Heart right ventricle (tissue), 16 donors: ENCODE measurements at regions of chr16 and their contacts with region 1.

Region 1: DNA sequence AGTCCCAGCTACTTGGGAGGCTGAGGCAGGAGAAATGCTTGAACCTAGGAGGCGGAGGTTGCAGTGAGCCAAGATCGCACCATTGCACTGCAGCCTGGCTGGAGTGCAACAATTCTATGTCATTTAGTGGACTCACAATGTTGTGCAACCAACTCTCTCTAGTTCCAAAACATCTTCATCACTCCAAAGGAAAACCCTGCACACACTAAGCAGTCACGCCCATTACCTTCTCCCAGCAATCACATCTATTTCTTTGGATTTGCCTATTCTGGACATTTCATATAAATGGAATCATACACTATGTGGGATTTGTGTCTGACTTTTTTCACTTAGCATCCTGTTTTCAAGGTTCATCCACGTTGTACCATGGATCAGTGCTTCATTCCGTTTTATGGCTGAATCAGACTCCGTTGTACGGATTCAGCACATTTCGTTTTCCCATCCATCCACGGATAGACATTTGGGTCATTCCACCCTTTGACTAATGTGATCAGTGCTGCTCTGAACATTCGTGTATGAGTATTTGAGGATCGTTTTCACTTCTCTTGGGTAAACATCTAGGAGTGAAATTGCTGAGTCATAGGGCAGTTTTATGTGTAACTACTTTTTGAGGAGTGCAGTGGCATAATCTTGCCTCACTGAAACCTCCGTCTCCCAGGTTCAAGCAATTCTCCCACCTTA is 45.3 kb upstream of the EMP2 start:
- DNase-seq: no peak
- ATAC-seq: no peak
- H3K4me3 ChIP-seq: no peak overlapping the region
- H3K27ac ChIP-seq: no peak overlapping the region
- H3K4me1 ChIP-seq: peaks cover 0 to 10% (median 3%) of the 10 kb centered on the region in 9 donors
- H3K27me3 ChIP-seq: no peaks in the 10 kb centered on the region
- CTCF ChIP-seq: no peak

Region 2: DNA sequence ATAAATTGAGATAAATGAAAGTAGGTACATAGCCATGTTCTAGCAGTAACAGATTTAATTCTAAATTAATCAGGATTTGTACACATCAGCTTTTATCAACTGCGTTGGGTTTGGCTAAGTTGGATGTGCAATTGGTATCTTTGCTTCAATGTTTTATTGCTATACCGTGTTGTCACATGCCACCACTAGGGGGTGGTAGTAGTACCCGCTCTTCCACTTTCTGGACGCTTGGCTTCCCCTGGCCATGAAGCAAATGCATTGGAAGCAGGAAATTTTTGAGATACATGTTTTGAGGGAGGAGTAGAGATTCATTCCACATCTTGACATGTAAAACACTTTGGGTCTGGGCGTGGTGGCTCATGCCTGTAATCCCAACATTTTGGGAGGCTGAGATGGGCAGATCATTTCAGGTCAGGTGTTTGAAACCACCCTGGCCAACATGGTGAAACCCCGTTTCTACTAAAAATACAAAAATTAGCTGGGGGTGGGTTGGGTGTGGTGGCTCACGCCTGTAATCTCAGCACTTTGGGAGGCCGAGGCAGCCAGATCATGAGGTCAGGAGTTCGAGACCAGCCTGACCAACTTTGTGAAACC is 104.0 kb before region 1 on chr16:
- intact Hi-C with region 1: loop called in 1 of 10 experiments (anchors 10 kb)
- DNase-seq: peak in 1 of 2 donors; percentile 58
- ATAC-seq: peak; percentile 49 to 86 (median 78)
- H3K4me3 ChIP-seq: no peak overlapping the region
- H3K27ac ChIP-seq: no peak overlapping the region
- H3K4me1 ChIP-seq: peaks cover 0 to 6% (median 0%) of the 10 kb centered on the region in 9 donors
- H3K27me3 ChIP-seq: no peaks in the 10 kb centered on the region
- CTCF ChIP-seq: peak; percentile 74 to 92 (median 83)

Region 3: DNA sequence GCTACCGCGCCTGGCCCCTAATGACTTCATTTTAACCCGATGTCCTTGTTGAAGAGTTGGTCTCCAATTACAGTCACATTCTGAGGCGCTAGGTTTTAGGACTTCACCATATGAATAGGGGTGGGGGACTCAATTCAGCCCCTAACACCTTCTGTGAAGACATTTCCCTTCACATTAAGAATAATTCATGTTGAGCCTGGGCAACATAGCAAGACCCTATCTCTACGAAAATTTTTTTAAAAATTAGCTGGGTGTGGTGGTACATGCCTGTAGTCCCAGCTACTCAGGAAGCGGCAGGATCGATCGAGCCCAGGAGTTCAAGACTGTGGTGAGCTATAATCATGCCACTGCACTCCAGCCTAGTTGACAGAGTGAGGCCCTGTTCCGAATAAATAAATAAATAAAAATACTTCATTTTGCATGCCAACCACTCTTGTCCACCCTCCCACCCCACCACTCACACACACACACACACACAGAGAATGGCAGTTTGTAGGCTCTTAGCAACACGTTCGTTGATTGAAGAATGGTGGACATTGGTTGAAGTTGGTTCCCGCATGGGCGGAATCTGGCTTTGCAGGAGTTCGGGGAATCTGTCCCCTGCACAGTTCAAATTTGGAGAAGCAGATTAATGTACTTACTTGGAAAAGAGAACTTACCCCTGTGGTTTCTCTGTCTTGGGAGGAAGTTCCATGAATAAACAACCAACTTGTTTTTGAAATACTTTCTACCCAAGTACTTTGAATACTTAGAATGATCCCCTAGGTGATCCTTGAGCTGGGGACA is 220.7 kb after region 1 on chr16:
- intact Hi-C with region 1: no loop called
- DNase-seq: no peak
- ATAC-seq: peak in 6 of 8 donors; percentile 17 to 73 (median 48)
- H3K4me3 ChIP-seq: no peak overlapping the region
- H3K27ac ChIP-seq: peak overlapping the region in 3 of 10 donors; percentile 10 to 91 (median 30)
- H3K4me1 ChIP-seq: peaks cover 0 to 42% (median 16%) of the 10 kb centered on the region in 9 donors
- H3K27me3 ChIP-seq: peaks cover 0 to 4% (median 0%) of the 10 kb centered on the region in 7 donors
- CTCF ChIP-seq: no peak